Activated naive CD4-positive, alpha-beta T cell treated with anti-CD3 and anti-CD28 coated beads for 36 hours (primary cell): ENCODE measurements at regions of chr15 and their contacts with region 1.

Region 1: GRCh38 chr15:65400760-65401610 is 21.8 kb downstream of the IGDCC4 start:
- DNase-seq: peak; percentile 68
- H3K4me3 Mint-ChIP-seq: no peak overlapping the region
- H3K27ac Mint-ChIP-seq: no peak overlapping the region
- H3K4me1 Mint-ChIP-seq: peaks cover 6% of the 10 kb centered on the region
- H3K27me3 Mint-ChIP-seq: peaks cover 31% of the 10 kb centered on the region

Region 2: GRCh38 chr15:65421360-65422070 is 20.5 kb after region 1 on chr15:
- CTCF ChIA-PET with region 1: interaction called, 14 read pairs
- intact Hi-C with region 1: no loop called
- DNase-seq: peak; percentile 36
- H3K4me3 Mint-ChIP-seq: peak overlapping the region; percentile 71
- H3K27ac Mint-ChIP-seq: no peak overlapping the region
- H3K4me1 Mint-ChIP-seq: peaks cover 11% of the 10 kb centered on the region
- H3K27me3 Mint-ChIP-seq: peaks cover 70% of the 10 kb centered on the region

Region 3: GRCh38 chr15:65550681-65551098 is 149.7 kb after region 1 on chr15:
- CTCF ChIA-PET with region 1: no interaction called
- intact Hi-C with region 1: loop called (anchors 10 kb)
- DNase-seq: no peak
- H3K4me3 Mint-ChIP-seq: no peak overlapping the region
- H3K27ac Mint-ChIP-seq: no peak overlapping the region
- H3K4me1 Mint-ChIP-seq: peaks cover 21% of the 10 kb centered on the region
- H3K27me3 Mint-ChIP-seq: no peaks in the 10 kb centered on the region